GM23248 (cell line): ENCODE measurements at regions of chr1 and their contacts with region 1.

Region 1: GRCh38 chr1:17661546-17662157 is 93.5 kb upstream of the ACTL8 start:
- DNase-seq: peak; percentile 64
- H3K4me3 ChIP-seq: no peak overlapping the region
- H3K27ac ChIP-seq: no peak overlapping the region
- H3K4me1 ChIP-seq: no peaks in the 10 kb centered on the region
- H3K27me3 ChIP-seq: no peaks in the 10 kb centered on the region

Region 2: DNA sequence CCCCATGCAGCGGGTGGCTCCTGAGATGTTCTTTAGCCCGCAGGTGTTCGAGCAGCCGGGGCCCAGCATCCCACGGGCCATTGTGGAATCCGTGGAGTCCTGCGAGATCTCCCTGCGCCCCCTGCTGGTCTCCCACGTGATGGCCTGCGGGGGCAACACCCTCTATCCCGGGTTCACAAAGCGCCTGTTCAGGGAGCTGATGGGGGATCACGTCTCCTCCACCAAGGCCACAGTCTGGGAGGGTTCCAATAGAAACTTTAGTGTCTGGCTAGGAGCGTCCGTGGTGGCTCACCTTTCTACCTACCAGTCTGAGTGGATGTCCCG is 164.5 kb after region 1 on chr1:
- in situ Hi-C with region 1: loop called (anchors 10 kb)
- DNase-seq: peak; percentile 66
- H3K4me3 ChIP-seq: no peak overlapping the region
- H3K27ac ChIP-seq: no peak overlapping the region
- H3K4me1 ChIP-seq: no peaks in the 10 kb centered on the region
- H3K27me3 ChIP-seq: no peaks in the 10 kb centered on the region

Region 3: DNA sequence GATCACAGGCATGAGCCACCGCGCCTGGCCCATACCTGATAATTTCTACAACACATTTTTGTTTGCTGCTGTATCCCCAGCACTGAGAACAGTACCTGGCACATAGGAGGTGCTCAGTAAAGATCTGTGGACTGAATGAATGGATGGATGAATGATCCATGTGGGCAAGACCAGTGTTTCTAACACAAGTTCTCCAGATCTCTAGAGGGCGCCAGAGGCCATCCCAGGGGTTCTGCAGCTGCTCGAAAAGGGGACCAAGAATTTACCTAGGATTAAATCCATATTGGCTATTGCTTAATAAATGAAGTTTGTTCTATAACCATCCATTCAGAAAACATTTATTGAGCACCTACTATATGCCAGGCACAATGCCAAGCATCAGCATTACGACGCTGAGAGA is 261.2 kb after region 1 on chr1:
- in situ Hi-C with region 1: loop called (anchors 10 kb)
- DNase-seq: peak; percentile 62
- H3K4me3 ChIP-seq: no peak overlapping the region
- H3K27ac ChIP-seq: no peak overlapping the region
- H3K4me1 ChIP-seq: no peaks in the 10 kb centered on the region
- H3K27me3 ChIP-seq: peaks cover 7% of the 10 kb centered on the region; the same call in 1 of the 2 replicates

Region 4: DNA sequence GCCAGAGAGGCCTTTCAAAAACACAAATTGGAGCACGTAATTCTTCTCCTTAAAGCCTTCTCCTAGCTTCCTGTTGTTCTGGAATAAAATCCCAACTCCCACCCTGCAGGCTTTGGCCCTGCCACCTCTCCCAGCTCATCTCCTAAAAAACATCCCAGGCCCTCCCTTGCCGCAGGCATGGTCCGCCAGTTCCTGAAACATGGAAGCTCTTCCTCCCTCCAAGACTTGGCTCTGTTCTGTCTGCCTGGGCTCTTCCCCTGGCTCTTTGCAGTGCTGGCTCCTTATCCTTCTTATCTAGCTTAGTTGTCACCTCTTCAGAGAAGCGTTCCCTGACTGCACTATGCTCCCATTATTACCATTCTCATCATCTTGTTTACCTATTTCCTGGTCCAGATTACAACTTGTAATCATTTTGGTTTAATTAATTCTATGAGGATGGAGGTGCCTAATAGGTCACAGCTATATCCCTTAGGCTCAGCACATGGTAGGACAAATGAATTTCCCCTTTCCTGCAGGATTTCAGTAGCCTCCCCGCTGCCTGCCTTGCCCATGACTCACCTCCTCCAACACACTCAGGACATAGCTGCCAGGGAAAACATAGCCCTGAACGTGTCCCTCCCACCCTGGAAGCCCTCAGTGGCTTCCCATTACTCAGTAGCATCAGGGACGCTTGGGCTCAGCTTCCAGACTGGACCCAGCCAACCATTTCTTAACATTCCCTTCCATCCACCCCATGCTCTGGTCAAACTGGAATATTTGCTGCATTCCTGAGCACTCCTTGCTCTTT is 430.2 kb after region 1 on chr1:
- in situ Hi-C with region 1: loop called (anchors 10 kb)
- DNase-seq: peak; percentile 88
- H3K4me3 ChIP-seq: no peak overlapping the region
- H3K27ac ChIP-seq: no peak overlapping the region
- H3K4me1 ChIP-seq: peaks cover 11% of the 10 kb centered on the region
- H3K27me3 ChIP-seq: no peaks in the 10 kb centered on the region

Region 5: GRCh38 chr1:18597160-18598042 is 935.7 kb after region 1 on chr1:
- in situ Hi-C with region 1: loop called (anchors 25 kb)
- DNase-seq: peak; percentile 63
- H3K4me3 ChIP-seq: no peak overlapping the region
- H3K27ac ChIP-seq: no peak overlapping the region
- H3K4me1 ChIP-seq: no peaks in the 10 kb centered on the region
- H3K27me3 ChIP-seq: peaks cover 5% of the 10 kb centered on the region; the same call in 1 of the 2 replicates